Naive thymus-derived CD4-positive, alpha-beta T cell (primary cell): ENCODE measurements at regions of chr15 and their contacts with region 1.

Region 1: DNA sequence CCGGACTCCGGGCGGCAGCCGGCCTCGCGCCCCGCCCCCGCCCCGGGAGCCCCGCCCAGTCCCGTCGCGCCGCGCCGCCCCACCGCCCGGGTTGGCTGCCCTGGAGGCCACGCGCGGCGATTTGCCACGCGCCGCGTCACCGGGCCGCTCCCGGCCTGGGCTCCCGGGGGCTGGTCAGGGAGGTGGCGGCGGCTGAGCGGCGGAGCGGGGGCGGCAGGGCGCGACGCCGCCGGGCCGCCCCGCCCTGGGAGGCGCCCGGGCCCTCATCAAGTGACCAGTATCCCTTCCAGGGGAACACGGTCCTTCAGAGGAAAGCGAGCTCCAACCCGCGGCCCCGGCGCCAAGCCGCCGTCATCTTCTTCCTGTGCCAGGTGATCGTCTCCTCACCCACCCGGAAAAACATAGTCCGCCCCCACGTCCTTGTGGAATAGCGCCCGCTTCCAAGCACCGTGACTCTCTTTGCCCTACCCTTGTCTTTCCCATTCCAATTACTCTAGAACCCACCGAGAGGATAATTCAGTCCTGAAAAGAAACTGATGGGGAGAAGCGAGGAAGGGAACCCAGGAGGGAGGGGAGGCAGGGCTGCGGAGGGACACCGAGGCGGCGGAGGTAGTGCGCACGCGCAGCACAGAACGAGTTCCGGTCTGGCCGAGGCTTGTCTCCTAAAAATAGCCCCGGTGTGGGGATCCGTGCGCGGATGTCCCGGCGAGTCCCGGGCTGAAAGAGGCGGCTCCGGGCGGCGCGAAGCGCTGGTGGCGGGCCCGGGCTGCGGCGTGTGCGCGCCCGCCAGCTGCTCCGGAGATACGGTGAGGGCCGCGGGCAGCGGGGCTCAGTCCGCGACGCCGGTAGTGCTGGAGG is at the start of gene MEF2A:
- DNase-seq: peak; percentile 86 to 94 (median 91)
- ATAC-seq: peak; percentile 86
- H3K4me3 ChIP-seq: peak within 1 kb of the TSS; percentile 100
- H3K4me3 Mint-ChIP-seq: peak within 1 kb of the TSS; percentile 96 to 100 (median 98)
- H3K27ac ChIP-seq: peak within 1 kb of the TSS; percentile 81
- H3K27ac Mint-ChIP-seq: peak within 1 kb of the TSS; percentile 93 to 99 (median 97)
- H3K4me1 ChIP-seq: peaks cover 8 to 24% of the 10 kb centered on the region in 2 donors
- H3K4me1 Mint-ChIP-seq: peaks cover 32 to 62% (median 55%) of the 10 kb centered on the region in 7 donors
- H3K27me3 ChIP-seq: no peaks in the 10 kb centered on the region
- H3K27me3 Mint-ChIP-seq: peaks cover 0 to 5% (median 0%) of the 10 kb centered on the region in 5 donors
- total RNA-seq, gene MEF2A: 24.2 to 42.8 (median 38.5) TPM

Region 2: DNA sequence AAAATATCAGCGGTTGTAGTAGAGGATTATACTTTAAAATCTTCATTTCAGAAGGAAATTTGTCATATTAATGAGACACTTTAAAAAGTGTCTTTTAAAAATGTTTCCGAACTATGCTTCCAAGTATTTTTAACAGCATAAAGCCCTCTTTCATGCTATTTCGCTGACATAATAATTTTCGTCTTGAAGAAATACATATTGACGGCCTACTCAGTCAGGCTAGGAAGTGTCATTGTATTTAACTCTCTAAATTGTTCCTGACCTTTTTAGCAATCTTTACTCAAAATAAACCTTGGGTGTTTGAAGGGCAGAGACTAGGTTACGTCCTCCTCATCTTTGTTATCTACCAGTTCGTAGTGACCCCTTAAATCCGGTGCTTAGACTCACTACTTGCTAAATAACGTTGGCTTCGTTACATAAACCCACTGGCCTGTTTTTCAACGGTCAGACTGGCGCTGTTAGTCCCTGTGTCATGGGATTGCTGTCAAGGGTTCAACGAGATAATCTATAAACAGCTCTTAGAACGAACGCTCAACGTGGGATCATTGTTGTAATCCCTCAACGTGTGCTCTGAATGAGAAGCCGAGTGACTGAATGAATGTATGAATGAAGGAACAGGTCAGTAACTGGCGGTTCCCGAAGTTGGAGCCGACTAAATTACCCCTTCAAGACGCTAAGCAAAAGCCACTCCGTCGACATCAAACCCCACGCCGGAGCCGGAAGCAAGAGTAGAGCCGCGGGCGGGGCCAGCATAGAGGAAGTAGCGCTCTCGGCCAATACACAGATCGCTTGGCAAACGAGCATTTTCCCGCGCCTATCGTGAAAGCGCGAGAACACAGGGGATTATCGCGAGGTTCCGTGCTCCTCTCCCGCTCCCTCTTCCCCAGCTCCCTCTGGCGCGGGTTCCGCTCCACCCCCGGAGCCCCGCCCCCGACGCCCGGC is 314.8 kb before region 1 on chr15:
- CTCF ChIA-PET with region 1: no interaction called
- POLR2A ChIA-PET with region 1: no interaction called
- intact Hi-C with region 1: loop called (anchors 1 kb)
- DNase-seq: peak; percentile 78 to 95 (median 92)
- ATAC-seq: peak; percentile 96
- H3K4me3 ChIP-seq: peak overlapping the region; percentile 76
- H3K4me3 Mint-ChIP-seq: peak overlapping the region in 8 of 10 donors; percentile 81 to 95 (median 92)
- H3K27ac ChIP-seq: peak overlapping the region; percentile 65
- H3K27ac Mint-ChIP-seq: peak overlapping the region; percentile 83 to 92 (median 90)
- H3K4me1 ChIP-seq: peaks cover 14 to 28% of the 10 kb centered on the region in 2 donors
- H3K4me1 Mint-ChIP-seq: peaks cover 24 to 32% (median 27%) of the 10 kb centered on the region in 7 donors
- H3K27me3 ChIP-seq: no peaks in the 10 kb centered on the region
- H3K27me3 Mint-ChIP-seq: no peaks in the 10 kb centered on the region

Region 3: GRCh38 chr15:99296386-99296785 is 269.1 kb before region 1 on chr15:
- CTCF ChIA-PET with region 1: no interaction called
- POLR2A ChIA-PET with region 1: no interaction called
- intact Hi-C with region 1: no loop called
- DNase-seq: no peak
- ATAC-seq: no peak
- H3K4me3 ChIP-seq: no peak overlapping the region
- H3K4me3 Mint-ChIP-seq: no peak overlapping the region
- H3K27ac ChIP-seq: no peak overlapping the region
- H3K27ac Mint-ChIP-seq: no peak overlapping the region
- H3K4me1 ChIP-seq: no peaks in the 10 kb centered on the region
- H3K4me1 Mint-ChIP-seq: peaks cover 0 to 5% (median 0%) of the 10 kb centered on the region in 7 donors
- H3K27me3 ChIP-seq: no peaks in the 10 kb centered on the region
- H3K27me3 Mint-ChIP-seq: no peaks in the 10 kb centered on the region

Region 4: DNA sequence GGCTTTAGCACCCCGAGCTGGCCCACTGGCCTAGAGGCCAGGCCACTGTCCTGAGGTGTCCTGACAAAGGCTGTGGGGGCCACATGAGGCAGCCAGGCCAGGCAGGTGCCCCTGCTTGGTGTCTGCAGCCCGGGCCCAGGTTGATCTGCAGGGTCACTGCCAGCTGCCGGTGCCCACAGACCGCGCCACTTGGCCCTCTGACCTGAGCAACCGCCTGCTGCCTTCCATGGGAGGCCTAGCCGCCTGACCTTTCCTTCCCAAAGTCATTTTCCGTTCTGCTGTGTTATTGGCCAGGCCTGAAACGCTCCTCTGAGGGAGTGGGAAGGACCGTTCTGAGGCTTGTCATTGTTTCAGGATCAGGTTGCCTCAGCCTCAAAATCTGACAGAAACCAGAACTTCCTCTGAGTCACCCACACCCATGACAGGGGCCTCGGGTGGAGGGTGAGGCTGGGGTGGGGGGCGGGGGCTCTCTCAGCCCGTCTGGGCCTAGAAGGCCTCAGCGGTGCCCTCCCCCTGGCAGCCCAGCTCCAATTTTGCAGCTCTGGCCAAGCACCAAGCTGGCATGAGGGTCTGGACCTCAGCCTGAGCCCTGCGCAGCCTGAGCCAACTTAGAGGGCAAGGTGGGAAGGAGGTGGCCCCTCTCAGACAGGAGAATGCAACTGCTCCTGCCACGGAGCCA is 140.4 kb before region 1 on chr15:
- CTCF ChIA-PET with region 1: interaction called, 4 read pairs
- POLR2A ChIA-PET with region 1: interaction called, 8 read pairs
- intact Hi-C with region 1: loop called (anchors 1 to 5 kb)
- DNase-seq: peak in 7 of 9 donors; percentile 33 to 63 (median 39)
- ATAC-seq: peak; percentile 79
- H3K4me3 ChIP-seq: peak overlapping the region; percentile 0
- H3K4me3 Mint-ChIP-seq: peak overlapping the region; percentile 65 to 91 (median 82)
- H3K27ac ChIP-seq: peak overlapping the region; percentile 72
- H3K27ac Mint-ChIP-seq: peak overlapping the region; percentile 89 to 98 (median 97)
- H3K4me1 ChIP-seq: peaks cover 0 to 60% of the 10 kb centered on the region in 2 donors
- H3K4me1 Mint-ChIP-seq: peaks cover 22 to 82% (median 75%) of the 10 kb centered on the region in 7 donors
- H3K27me3 ChIP-seq: no peaks in the 10 kb centered on the region
- H3K27me3 Mint-ChIP-seq: no peaks in the 10 kb centered on the region

Region 5: DNA sequence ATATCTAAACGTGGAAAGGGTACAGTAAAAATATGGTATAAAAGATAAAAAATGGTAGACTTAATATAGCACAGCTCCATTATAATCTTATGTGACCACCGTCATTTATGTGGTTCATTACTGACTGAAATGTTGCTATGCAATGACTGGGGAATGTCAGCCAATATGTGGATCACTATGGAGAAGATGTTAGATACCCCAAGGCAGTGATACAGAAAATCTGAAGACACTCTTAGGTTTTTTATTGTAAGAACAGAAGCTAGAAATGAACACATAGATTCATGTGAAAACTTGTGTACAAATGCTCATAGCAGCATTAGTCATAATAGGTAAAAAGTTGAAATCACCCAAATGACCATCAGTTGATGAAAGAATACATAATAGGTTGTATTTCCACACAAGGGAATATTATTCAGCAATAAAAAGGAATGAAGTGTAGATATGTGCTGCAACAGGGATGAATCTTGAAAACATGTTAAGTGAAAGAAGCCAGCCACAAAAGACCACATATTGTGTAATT is 18.6 kb after region 1 on chr15:
- CTCF ChIA-PET with region 1: no interaction called
- POLR2A ChIA-PET with region 1: interaction called, 4 read pairs
- intact Hi-C with region 1: loop called in 1 of 2 experiments (anchors 2 kb)
- DNase-seq: no peak
- ATAC-seq: no peak
- H3K4me3 ChIP-seq: no peak overlapping the region
- H3K4me3 Mint-ChIP-seq: no peak overlapping the region
- H3K27ac ChIP-seq: no peak overlapping the region
- H3K27ac Mint-ChIP-seq: peak overlapping the region in 1 of 9 donors; percentile 5
- H3K4me1 ChIP-seq: no peaks in the 10 kb centered on the region
- H3K4me1 Mint-ChIP-seq: peaks cover 13 to 57% (median 49%) of the 10 kb centered on the region in 7 donors
- H3K27me3 ChIP-seq: no peaks in the 10 kb centered on the region
- H3K27me3 Mint-ChIP-seq: no peaks in the 10 kb centered on the region

Region 6: DNA sequence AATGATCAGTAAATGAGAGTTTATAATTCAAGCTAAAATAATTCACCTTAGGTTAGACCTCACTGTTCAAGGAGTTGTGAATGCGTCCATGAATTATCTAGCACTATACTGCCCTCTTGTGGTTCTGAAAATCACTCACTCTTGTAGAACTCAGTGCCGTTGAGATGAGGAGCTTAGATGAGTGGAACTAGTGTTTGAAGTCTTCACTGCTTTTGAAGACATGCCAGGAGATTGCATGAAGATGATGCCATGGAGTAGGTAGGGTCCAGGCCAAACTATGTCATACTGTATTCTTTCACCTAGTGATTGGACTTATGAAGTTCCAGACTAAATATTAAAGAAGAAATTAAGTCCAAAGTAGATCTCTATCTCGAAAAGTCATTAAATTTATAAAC is 138.9 kb after region 1 on chr15:
- CTCF ChIA-PET with region 1: interaction called, 8 read pairs
- POLR2A ChIA-PET with region 1: interaction called, 8 read pairs
- intact Hi-C with region 1: loop called (anchors 1 kb)
- DNase-seq: peak in 7 of 9 donors; percentile 62 to 81 (median 76)
- ATAC-seq: peak; percentile 92
- H3K4me3 ChIP-seq: no peak overlapping the region
- H3K4me3 Mint-ChIP-seq: no peak overlapping the region
- H3K27ac ChIP-seq: no peak overlapping the region
- H3K27ac Mint-ChIP-seq: peak overlapping the region in 8 of 9 donors; percentile 4 to 91 (median 16)
- H3K4me1 ChIP-seq: peaks cover 0 to 43% of the 10 kb centered on the region in 2 donors
- H3K4me1 Mint-ChIP-seq: peaks cover 24 to 69% (median 54%) of the 10 kb centered on the region in 7 donors
- H3K27me3 ChIP-seq: no peaks in the 10 kb centered on the region
- H3K27me3 Mint-ChIP-seq: no peaks in the 10 kb centered on the region

Region 7: GRCh38 chr15:100596792-100597191 is 1031.3 kb after region 1 on chr15:
- CTCF ChIA-PET with region 1: no interaction called
- POLR2A ChIA-PET with region 1: no interaction called
- intact Hi-C with region 1: loop called in 1 of 2 experiments (anchors 5 kb)
- DNase-seq: peak; percentile 52 to 97 (median 94)
- ATAC-seq: peak; percentile 93
- H3K4me3 ChIP-seq: peak overlapping the region; percentile 49
- H3K4me3 Mint-ChIP-seq: peak overlapping the region in 7 of 10 donors; percentile 69 to 87 (median 86)
- H3K27ac ChIP-seq: peak overlapping the region; percentile 91
- H3K27ac Mint-ChIP-seq: peak overlapping the region in 4 of 9 donors; percentile 96 to 98 (median 96)
- H3K4me1 ChIP-seq: peaks cover 52 to 82% of the 10 kb centered on the region in 2 donors
- H3K4me1 Mint-ChIP-seq: peaks cover 0 to 78% (median 51%) of the 10 kb centered on the region in 7 donors
- H3K27me3 ChIP-seq: no peaks in the 10 kb centered on the region
- H3K27me3 Mint-ChIP-seq: peaks cover 0 to 2% (median 0%) of the 10 kb centered on the region in 5 donors